Activated CD8-positive, alpha-beta T cell treated with anti-CD3 and anti-CD28 coated beads, Interleukin-2, amount 10 ng/mL, durations not matched to agents 7 days and 5 days (primary cell): ENCODE measurements at regions of chrX and their contacts with region 1.

Region 1: GRCh38 chrX:151753313-151754041 is 18.9 kb downstream of the CNGA2 start:
- DNase-seq: peak; percentile 24
- ATAC-seq: no peak
- H3K4me3 Mint-ChIP-seq: no peak overlapping the region
- H3K27ac Mint-ChIP-seq: no peak overlapping the region
- H3K4me1 Mint-ChIP-seq: no peaks in the 10 kb centered on the region
- H3K27me3 Mint-ChIP-seq: peaks cover 2% of the 10 kb centered on the region

Region 2: DNA sequence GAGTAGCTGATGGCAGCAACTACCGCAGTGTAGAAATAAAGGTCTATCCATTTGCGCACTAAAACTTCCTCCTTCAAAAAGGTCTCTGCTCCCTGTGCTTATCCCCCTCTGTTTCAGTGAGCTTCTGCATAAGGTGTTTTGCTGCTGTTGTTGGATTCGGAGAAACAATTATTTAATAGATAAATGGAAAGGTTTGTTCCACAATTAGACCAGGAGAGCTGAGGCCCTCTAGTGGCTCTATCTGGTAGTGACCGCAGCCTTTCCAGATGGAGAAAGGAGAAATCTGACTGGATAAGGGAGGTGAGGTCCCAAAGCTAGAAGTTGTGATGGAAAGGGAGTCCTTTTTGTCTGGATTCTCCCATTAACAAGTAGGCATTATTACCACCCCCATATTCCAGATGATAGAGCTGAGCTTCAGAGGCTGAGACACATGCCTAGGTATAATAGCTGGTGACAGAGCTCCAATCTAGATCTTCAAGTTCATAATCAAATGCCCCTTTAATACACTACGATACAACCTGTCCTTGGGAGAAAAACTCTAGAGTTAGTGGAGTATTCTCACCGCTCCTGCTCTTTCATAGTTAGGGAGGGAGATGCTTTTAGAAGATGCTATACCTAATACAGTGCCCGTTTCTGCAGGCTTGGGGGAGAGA is 879.1 kb after region 1 on chrX:
- CTCF ChIA-PET with region 1: interaction called, 18 read pairs
- POLR2A ChIA-PET with region 1: no interaction called
- DNase-seq: peak; percentile 41
- ATAC-seq: no peak
- H3K4me3 Mint-ChIP-seq: no peak overlapping the region
- H3K27ac Mint-ChIP-seq: no peak overlapping the region
- H3K4me1 Mint-ChIP-seq: no peaks in the 10 kb centered on the region
- H3K27me3 Mint-ChIP-seq: peaks cover 14% of the 10 kb centered on the region